Activated CD4-positive, alpha-beta memory T cell treated with anti-CD3 and anti-CD28 coated beads for 36 hours (primary cell): ENCODE measurements at regions of chr2 and their contacts with region 1.

Region 1: DNA sequence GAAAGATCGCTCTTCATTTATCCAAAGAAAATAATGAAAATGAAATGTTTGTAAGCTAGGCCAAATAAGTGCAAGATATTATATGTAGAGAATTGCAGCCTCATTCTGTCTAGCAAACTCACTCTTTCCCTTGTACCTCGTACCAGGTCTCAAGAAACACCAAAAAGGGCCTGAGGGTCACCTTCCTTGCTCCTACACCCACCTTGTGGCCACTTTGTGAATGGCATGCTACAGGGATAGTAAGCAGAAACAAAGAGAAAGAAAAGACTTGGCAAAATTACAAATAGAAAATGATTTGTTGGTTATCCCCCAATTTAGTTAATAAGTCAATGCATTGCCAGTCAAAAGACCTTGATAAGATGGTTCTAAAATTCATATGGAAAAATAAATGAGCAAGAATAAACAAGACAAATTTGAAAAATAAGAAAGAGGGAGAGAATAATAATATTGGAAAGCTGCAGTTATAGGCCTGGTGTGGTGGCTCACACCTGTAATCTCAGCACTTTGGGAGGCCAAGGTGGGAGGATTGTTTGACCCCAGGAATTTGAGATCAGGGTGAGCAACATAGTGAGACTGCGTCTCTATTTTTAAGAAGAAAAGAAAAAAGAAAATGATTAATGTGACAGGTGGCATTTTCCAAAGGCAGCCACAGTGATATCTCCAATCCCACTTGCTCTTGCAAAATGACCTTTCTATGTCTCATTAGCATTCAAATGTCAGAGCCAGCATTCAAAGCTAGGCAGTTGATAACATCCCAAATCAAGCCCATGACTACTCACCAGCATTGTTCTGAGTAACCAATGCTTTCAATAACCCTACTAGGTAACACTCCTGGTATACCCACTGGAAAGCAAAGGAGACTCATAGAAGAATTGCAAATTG is 38.8 kb upstream of the BMP10 start:
- DNase-seq: peak; percentile 85
- H3K4me3 Mint-ChIP-seq: no peak overlapping the region
- H3K27ac Mint-ChIP-seq: peak overlapping the region; percentile 78
- H3K4me1 Mint-ChIP-seq: peaks cover 36% of the 10 kb centered on the region
- H3K27me3 Mint-ChIP-seq: no peaks in the 10 kb centered on the region

Region 2: GRCh38 chr2:68516051-68516955 is 393.7 kb before region 1 on chr2:
- CTCF ChIA-PET with region 1: no interaction called
- POLR2A ChIA-PET with region 1: no interaction called
- intact Hi-C with region 1: loop called (anchors 5 kb)
- DNase-seq: no peak
- H3K4me3 Mint-ChIP-seq: no peak overlapping the region
- H3K27ac Mint-ChIP-seq: no peak overlapping the region
- H3K4me1 Mint-ChIP-seq: peaks cover 8% of the 10 kb centered on the region
- H3K27me3 Mint-ChIP-seq: no peaks in the 10 kb centered on the region

Region 3: GRCh38 chr2:68709421-68709911 is 200.6 kb before region 1 on chr2:
- CTCF ChIA-PET with region 1: interaction called, 19 read pairs
- POLR2A ChIA-PET with region 1: no interaction called
- intact Hi-C with region 1: loop called (anchors 1 kb)
- DNase-seq: peak; percentile 31
- H3K4me3 Mint-ChIP-seq: no peak overlapping the region
- H3K27ac Mint-ChIP-seq: peak overlapping the region; percentile 55
- H3K4me1 Mint-ChIP-seq: peaks cover 31% of the 10 kb centered on the region
- H3K27me3 Mint-ChIP-seq: no peaks in the 10 kb centered on the region

Region 4: DNA sequence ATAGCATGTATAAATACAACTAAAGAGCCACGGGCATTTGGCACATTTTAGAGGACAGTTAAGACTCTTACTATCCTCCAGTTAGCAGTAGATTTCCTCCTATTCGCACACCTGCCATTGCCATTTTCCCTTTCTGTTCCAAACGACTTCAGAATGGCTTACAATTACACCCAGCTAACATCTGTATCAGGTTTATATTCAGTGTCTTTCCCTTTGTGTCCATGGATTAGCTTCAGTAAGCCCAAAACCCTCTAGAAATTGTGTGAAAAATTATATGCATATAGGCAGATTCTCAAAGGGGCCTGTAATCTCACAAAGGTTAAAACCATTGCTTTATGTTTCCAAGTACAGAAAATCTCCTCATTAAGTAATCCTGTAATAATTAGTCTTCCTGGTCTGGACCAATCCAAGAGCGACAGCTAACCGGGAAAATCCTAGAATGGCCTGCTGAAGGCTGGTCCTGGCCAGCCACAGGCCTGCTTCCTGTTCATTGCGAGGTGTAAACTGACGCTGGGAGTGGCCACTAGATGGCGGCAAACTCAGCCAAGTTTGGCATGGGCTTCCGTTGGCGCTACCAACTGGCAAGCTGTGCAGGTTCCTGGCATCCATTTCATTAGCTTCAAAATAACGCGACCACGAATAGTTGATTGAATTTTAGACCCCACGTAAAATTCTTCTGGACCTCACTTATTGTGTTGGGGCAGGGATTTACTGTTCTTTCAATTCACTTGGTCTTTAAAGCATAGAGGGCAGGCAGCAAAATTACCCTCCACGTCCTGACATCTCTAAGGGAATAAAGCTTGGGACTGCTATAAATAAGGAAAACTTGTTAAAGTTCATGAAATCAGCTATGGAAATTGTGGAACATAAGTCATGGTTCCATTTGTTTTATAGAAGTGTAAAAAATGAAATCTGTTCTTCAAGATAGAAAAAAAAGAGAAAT is 158.4 kb before region 1 on chr2:
- CTCF ChIA-PET with region 1: interaction called, 77 read pairs
- POLR2A ChIA-PET with region 1: interaction called, 6 read pairs
- intact Hi-C with region 1: loop called (anchors 1 kb)
- DNase-seq: peak; percentile 95
- H3K4me3 Mint-ChIP-seq: peak overlapping the region; percentile 30
- H3K27ac Mint-ChIP-seq: peak overlapping the region; percentile 79
- H3K4me1 Mint-ChIP-seq: peaks cover 85% of the 10 kb centered on the region
- H3K27me3 Mint-ChIP-seq: no peaks in the 10 kb centered on the region

Region 5: DNA sequence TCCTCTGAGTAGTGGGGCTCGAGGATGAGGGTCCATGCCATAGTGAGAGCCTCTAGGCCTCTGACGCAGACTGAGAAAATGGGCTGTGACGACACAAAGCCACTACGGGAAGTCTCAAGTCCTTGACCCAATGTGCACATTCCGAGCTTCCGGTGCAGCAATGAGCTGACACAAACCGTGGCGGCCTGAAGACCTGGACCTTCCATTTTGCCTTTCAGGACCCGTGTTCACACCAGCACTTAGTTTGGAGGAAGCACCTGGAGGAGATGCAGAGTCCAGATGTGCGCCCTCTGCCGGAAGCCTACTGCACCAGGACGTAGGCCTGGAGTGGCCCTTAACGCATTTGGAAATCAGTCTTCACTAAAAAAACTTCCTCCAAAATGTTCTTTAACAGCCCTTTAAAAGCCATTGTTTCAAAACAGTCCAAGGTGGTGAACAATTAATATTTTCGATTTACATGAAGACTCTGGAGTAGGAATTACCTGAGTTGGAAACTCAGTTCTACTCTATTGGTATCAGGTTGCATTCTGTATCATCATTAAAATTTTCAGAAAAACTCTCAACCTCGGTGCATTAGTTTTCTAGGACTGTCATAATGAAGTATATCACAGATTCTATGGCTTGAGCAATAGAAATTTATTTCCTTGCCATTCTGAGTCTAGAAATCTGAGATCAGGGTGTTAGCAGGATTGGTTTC is 72.7 kb before region 1 on chr2:
- CTCF ChIA-PET with region 1: interaction called, 25 read pairs
- POLR2A ChIA-PET with region 1: interaction called, 4 read pairs
- intact Hi-C with region 1: loop called (anchors 1 kb)
- DNase-seq: peak; percentile 77
- H3K4me3 Mint-ChIP-seq: no peak overlapping the region
- H3K27ac Mint-ChIP-seq: peak overlapping the region; percentile 63
- H3K4me1 Mint-ChIP-seq: peaks cover 47% of the 10 kb centered on the region
- H3K27me3 Mint-ChIP-seq: no peaks in the 10 kb centered on the region